SK-N-SH (cell line): ENCODE measurements at regions of chr2 and their contacts with region 1.

Region 1: DNA sequence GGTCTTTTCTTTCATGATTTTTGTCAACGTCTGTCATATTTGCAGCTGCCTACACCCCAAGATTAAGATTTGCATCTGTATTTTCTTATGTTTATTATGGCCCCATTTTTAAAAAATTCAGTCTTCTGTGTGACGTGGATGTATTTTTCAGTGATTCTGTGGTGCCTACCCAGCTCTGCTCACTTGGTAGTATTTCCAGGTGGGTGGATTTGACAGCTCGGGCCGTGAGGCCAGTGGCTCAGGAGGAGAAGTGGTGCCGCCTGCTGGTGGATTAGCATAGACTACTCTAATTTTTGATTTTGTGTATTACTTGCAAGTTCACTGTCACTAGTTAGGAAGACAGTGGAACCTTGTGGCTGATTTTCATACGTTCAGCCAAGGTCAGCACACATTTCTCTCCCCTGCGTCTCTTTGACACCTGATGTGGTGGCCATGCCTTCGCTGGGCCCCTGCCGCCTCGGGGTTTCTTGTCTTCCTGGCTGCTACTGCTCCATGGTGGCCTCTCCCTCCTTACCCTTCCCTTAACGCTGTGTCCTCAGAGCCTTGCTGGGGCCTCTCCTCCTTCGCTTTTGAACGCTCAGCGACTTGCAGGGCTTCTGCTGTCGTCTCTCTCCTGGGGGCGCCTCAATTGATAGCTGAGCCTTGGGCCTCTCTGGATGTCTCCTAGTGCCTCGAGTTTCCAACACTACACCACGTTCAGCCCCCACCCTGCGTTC is 89.3 kb downstream of the DGKD start:
- DNase-seq: peak; percentile 92
- H3K4me3 ChIP-seq: no peak overlapping the region; a peak in 1 of 4 replicates
- H3K27ac ChIP-seq: no peak overlapping the region
- H3K4me1 ChIP-seq: no peaks in the 10 kb centered on the region
- H3K27me3 ChIP-seq: no peaks in the 10 kb centered on the region
- CTCF ChIP-seq: peak; percentile 90
- EP300 ChIP-seq: no peak
- RAD21 ChIP-seq: peak; percentile 93

Region 2: DNA sequence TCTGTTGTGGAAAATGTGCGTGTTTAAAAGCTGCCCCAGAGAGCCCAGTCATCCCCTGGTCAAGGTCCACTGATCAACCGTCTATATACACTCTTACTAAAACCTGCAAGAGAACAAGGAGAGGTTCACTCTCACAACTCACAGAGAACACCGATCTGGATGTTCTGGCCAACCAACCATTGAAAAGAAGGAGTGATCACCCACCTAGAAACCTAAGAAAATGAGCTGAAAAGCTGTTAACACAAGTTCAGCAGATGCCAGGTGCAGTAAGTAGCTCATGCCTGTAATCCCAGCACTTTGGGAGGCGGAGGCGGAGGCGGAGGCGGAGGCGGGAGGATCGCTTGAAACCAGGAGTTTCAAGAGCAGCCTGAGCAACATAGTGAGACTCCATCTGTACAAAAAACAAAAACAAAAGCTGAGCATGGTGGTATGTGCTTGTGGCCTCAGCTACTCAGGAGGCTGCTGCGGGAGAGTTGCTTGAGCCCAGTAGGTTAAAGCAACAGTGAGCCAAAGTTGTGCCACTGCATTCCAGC is 177.7 kb before region 1 on chr2:
- CTCF ChIA-PET with region 1: interaction called, 10 read pairs
- POLR2A ChIA-PET with region 1: no interaction called
- DNase-seq: no peak
- H3K4me3 ChIP-seq: no peak overlapping the region
- H3K27ac ChIP-seq: no peak overlapping the region
- H3K4me1 ChIP-seq: no peaks in the 10 kb centered on the region
- H3K27me3 ChIP-seq: no peaks in the 10 kb centered on the region
- CTCF ChIP-seq: no peak
- EP300 ChIP-seq: no peak
- RAD21 ChIP-seq: no peak

Region 3: GRCh38 chr2:233353769-233354499 is 89.7 kb before region 1 on chr2 and contains the start of gene DGKD:
- CTCF ChIA-PET with region 1: interaction called, 15 read pairs
- POLR2A ChIA-PET with region 1: no interaction called
- DNase-seq: peak; percentile 99
- H3K4me3 ChIP-seq: peak within 1 kb of the TSS; percentile 82 to 84
- H3K27ac ChIP-seq: peak within 1 kb of the TSS; percentile 56 to 73; a peak in 3 of 4 replicates
- H3K4me1 ChIP-seq: peaks cover 29 to 33% of the 10 kb centered on the region in 2 experiments; a peak in 3 of 4 replicates
- H3K27me3 ChIP-seq: no peaks in the 10 kb centered on the region
- CTCF ChIP-seq: peak; percentile 41
- EP300 ChIP-seq: no peak
- RAD21 ChIP-seq: no peak
- polyA plus RNA-seq, gene DGKD: 17.7 and 21.7 TPM in 2 replicates

Region 4: DNA sequence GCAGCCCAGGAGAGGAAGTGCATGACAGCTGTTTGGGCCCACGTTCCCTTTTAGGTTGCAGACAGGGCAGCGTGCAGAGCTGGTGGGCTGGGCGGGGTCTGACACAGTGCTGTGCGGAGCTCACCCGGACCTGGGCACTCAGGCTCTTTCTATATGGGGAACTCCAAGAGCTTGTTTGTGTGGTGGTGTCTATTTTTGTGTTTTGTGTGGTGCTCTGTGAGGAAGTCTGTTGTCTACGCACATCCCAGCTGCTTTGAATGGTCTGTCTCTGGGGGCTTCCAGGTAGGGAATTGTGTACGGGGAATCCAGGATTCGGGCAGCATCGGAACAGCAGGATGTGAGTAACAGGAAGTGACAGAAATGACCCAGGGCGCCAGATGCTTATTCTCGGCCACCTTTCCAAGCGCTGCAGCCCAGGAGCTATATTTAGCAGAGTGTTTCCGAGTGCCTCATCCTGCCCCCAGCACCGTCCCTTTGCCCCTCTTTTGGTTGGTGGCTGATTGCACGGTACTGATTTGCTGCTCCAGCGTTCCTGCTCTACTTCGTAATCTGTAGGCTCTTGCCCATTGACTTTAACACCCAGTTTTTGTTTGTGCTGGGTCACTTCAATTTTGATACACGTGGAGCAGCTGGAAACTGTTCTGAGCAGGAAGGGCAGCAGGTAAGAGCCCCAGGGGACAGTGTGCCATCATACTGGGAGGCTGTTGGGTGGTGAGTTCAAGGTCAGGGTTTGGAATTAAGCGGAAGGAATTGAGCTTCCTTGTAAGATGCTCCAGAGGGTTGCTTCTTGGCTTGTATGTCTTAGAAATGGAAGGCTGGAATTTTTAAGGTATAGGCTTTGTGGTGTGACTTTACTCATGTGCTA is 24.6 kb before region 1 on chr2:
- CTCF ChIA-PET with region 1: interaction called, 28 read pairs
- POLR2A ChIA-PET with region 1: no interaction called
- DNase-seq: no peak
- H3K4me3 ChIP-seq: peak overlapping the region in 1 of 2 experiments; percentile 6; a peak in 1 of 4 replicates
- H3K27ac ChIP-seq: peak overlapping the region in 1 of 2 experiments; percentile 60; a peak in 2 of 4 replicates
- H3K4me1 ChIP-seq: peaks cover 37% of the 10 kb centered on the region in 2 experiments
- H3K27me3 ChIP-seq: no peaks in the 10 kb centered on the region
- CTCF ChIP-seq: no peak
- EP300 ChIP-seq: peak in 1 of 2 experiments; percentile 39; a peak in 1 of 4 replicates
- RAD21 ChIP-seq: no peak

Region 5: GRCh38 chr2:233455006-233455405 is 11.4 kb after region 1 on chr2:
- CTCF ChIA-PET with region 1: interaction called, 23 read pairs
- POLR2A ChIA-PET with region 1: no interaction called
- DNase-seq: no peak
- H3K4me3 ChIP-seq: no peak overlapping the region
- H3K27ac ChIP-seq: no peak overlapping the region
- H3K4me1 ChIP-seq: no peaks in the 10 kb centered on the region
- H3K27me3 ChIP-seq: no peaks in the 10 kb centered on the region
- CTCF ChIP-seq: no peak
- EP300 ChIP-seq: no peak
- RAD21 ChIP-seq: no peak